Activated CD4-positive, alpha-beta T cell treated with anti-CD3 and anti-CD28 coated beads for 36 hours (primary cell): ENCODE measurements at regions of chr17 and their contacts with region 1.

Region 1: GRCh38 chr17:28357061-28357900 is at the start of gene POLDIP2:
- DNase-seq: peak; percentile 98
- ATAC-seq: peak; percentile 99
- H3K4me3 Mint-ChIP-seq: peak within 1 kb of the TSS; percentile 80
- H3K27ac Mint-ChIP-seq: peak within 1 kb of the TSS; percentile 91
- H3K4me1 Mint-ChIP-seq: peaks cover 28% of the 10 kb centered on the region
- H3K27me3 Mint-ChIP-seq: no peaks in the 10 kb centered on the region
- total RNA-seq, gene POLDIP2: 84.9 to 98.4 TPM

Region 2: DNA sequence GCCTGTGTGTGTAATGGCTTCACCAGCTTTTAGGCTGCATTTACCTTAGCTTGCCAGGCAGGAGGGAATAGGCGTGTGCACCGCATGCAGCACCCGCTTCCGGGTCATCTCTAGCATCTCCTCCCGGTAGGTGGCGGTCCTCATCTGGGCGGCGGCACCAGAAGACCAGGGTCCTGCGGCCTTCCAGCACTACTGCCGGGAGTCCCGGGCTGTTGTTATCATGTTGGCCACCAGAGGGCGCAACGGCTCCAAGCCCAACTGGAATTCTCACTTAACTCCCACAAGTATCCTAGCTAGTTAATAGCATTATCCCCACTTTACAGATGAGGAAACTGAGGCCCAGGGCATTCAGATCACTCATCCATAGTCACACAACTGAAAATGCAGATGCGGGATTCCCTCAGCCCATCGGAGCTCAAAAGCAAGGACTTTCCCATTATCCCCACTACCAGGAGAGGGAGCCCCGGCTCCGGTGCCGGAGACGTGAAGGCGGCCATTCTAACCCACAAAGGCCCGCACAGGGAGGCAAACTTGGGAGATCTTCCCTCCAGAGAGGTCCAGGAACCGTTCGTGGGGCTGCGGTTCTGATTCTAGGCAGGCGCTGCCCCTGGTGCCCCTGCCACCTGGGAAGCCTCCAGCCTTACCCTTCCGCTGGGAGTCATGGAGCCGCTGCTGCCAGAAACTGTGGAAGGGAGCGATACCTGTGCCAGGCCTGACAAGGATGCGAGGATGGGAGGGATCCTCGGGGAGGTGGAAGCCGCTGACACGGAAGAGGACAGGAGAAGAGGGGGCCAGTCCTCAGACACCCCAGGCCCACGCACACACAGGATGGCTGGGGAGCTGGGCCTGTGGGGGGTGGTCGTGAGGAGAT is 702.4 kb before region 1 on chr17:
- CTCF ChIA-PET with region 1: no interaction called
- POLR2A ChIA-PET with region 1: no interaction called
- intact Hi-C with region 1: no loop called
- DNase-seq: peak; percentile 87
- ATAC-seq: peak; percentile 92
- H3K4me3 Mint-ChIP-seq: no peak overlapping the region
- H3K27ac Mint-ChIP-seq: no peak overlapping the region
- H3K4me1 Mint-ChIP-seq: peaks cover 7% of the 10 kb centered on the region
- H3K27me3 Mint-ChIP-seq: no peaks in the 10 kb centered on the region

Region 3: GRCh38 chr17:28041068-28041843 is 316.0 kb before region 1 on chr17:
- CTCF ChIA-PET with region 1: interaction called, 3 read pairs
- POLR2A ChIA-PET with region 1: no interaction called
- intact Hi-C with region 1: loop called in 1 of 2 experiments (anchors 1 kb)
- DNase-seq: peak; percentile 100
- ATAC-seq: peak; percentile 96
- H3K4me3 Mint-ChIP-seq: peak overlapping the region; percentile 79
- H3K27ac Mint-ChIP-seq: peak overlapping the region; percentile 74
- H3K4me1 Mint-ChIP-seq: peaks cover 52% of the 10 kb centered on the region
- H3K27me3 Mint-ChIP-seq: no peaks in the 10 kb centered on the region

Region 4: DNA sequence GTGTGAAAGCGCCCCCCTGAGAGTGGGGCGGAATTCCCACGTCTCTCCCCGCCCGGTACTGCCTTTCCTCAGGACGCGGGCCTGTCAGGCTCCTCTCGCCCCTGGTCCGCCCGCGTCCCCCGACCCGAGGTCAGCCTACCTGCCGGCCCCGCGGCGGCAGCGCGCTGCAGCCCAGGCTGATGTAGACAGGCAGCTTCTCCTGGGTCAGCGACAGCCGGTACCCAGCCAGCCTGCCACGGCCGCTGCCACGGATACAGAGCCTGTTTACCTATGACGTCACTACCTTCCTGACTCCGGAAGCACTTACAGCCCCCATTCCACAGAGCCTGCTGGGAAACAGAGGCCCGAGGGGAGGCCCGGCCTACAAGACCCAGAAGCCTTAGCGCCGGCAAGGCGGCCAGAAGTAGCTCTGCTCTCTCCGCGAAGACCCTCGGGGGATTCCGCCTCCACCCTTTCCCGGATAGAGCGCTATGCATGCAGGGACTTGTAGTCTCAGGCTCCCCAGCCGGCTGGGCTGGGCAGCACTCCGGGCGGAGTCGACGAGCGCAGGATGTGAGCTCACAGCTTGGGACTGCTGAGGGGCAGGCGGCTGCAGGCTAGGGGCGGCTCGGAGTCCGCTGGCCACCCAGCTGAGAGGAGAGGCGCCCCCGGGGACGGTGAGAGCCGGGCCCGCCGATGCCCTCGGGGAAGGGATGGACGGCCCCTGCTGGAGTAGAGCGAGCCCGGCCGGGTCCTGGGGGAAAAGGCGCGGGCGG is 21.9 kb before region 1 on chr17 and contains the starts of genes IFT20 and TNFAIP1:
- CTCF ChIA-PET with region 1: interaction called, 25 read pairs
- POLR2A ChIA-PET with region 1: interaction called, 39 read pairs
- intact Hi-C with region 1: loop called (anchors 1 kb)
- DNase-seq: peak; percentile 99
- ATAC-seq: peak; percentile 97
- H3K4me3 Mint-ChIP-seq: peak within 1 kb of the TSS; percentile 96
- H3K27ac Mint-ChIP-seq: peak within 1 kb of the TSS; percentile 91
- H3K4me1 Mint-ChIP-seq: peaks cover 36% of the 10 kb centered on the region
- H3K27me3 Mint-ChIP-seq: no peaks in the 10 kb centered on the region
- total RNA-seq, gene IFT20: 12.9 to 17.3 TPM
- total RNA-seq, gene TNFAIP1: 25.5 to 26.1 TPM

Region 5: DNA sequence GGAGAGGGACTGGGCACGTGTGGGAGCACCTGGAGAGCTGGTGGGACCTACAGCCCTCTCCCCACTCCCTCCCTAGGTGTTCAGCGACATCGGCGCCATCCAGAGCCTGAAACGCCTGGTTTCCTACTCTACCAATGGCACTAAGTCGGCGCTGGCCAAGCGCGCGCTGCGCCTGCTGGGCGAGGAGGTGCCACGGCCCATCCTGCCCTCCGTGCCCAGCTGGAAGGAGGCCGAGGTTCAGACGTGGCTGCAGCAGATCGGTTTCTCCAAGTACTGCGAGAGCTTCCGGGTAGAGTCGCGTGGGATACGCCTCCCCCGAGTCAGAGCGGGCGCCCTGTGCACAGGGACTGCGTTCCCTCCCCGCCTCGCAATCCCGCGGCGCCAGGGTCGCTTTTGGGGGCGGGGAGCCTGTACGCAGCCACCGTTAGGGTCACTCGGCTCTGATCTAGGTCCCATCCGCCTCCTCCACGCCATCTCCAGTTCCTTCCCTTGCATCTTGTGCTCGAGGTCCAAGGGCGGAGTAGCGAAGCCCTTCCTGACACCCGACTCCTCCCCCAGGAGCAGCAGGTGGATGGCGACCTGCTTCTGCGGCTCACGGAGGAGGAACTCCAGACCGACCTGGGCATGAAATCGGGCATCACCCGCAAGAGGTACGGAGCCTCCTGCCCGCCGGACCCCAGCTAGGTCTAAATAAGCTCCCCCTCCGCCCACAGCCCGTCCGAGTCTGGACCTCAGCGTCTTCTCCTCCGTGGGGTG is 27.2 kb after region 1 on chr17:
- CTCF ChIA-PET with region 1: interaction called, 5 read pairs
- POLR2A ChIA-PET with region 1: no interaction called
- intact Hi-C with region 1: loop called (anchors 1 kb)
- DNase-seq: peak; percentile 85
- ATAC-seq: peak; percentile 93
- H3K4me3 Mint-ChIP-seq: peak overlapping the region; percentile 86
- H3K27ac Mint-ChIP-seq: peak overlapping the region; percentile 73
- H3K4me1 Mint-ChIP-seq: peaks cover 17% of the 10 kb centered on the region
- H3K27me3 Mint-ChIP-seq: peaks cover 11% of the 10 kb centered on the region

Region 6: GRCh38 chr17:28426081-28426519 is 68.8 kb after region 1 on chr17:
- CTCF ChIA-PET with region 1: no interaction called
- POLR2A ChIA-PET with region 1: no interaction called
- intact Hi-C with region 1: no loop called
- DNase-seq: peak; percentile 22
- ATAC-seq: peak; percentile 51
- H3K4me3 Mint-ChIP-seq: no peak overlapping the region
- H3K27ac Mint-ChIP-seq: no peak overlapping the region
- H3K4me1 Mint-ChIP-seq: no peaks in the 10 kb centered on the region
- H3K27me3 Mint-ChIP-seq: no peaks in the 10 kb centered on the region

Region 7: DNA sequence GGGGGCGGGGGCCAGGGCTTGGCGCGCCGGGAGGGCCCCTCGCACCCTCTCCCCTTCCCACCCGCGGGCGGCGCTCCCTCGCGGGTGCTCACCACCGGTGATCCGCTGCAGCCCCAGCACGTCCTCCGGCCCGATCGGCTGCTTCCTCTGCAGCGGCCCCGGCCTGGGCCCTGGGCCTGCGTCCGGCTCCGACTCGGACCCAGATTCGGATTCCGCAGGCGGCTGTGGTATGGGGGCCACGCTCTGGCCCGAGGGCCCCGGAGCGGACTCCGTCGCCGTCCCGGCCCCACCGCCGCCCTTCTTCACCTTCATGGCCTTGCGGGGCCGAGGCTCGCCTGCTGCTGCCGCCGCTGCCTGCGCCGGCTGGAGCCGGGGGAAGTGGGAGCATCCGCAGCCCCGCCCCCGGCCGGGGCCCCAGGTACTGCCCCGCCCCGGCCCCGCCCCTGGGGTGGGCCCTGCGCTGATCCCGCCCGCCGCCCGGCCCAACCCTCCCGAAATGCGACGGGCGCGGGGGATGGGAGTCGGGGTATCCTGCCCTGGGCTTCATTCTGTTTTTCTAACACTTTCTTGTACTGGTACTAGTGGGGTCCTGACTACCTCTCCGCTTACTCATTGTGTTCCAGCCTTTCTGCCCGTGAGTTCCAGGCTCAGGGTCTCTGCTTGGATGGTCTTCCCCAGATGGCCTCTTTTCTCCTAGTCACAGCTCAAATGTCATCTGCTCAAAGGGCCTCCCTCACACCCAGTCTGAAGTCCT is 195.1 kb after region 1 on chr17 and contains the start of gene UNC119:
- CTCF ChIA-PET with region 1: no interaction called
- POLR2A ChIA-PET with region 1: no interaction called
- intact Hi-C with region 1: loop called (anchors 1 to 10 kb)
- DNase-seq: peak; percentile 91
- ATAC-seq: peak; percentile 71
- H3K4me3 Mint-ChIP-seq: peak within 1 kb of the TSS; percentile 87
- H3K27ac Mint-ChIP-seq: peak within 1 kb of the TSS; percentile 70
- H3K4me1 Mint-ChIP-seq: peaks cover 52% of the 10 kb centered on the region
- H3K27me3 Mint-ChIP-seq: no peaks in the 10 kb centered on the region
- total RNA-seq, gene UNC119: 35.9 to 48.7 TPM

Region 8: GRCh38 chr17:28661635-28662537 is 304.6 kb after region 1 on chr17 and contains the starts of genes SDF2 and SUPT6H:
- CTCF ChIA-PET with region 1: no interaction called
- POLR2A ChIA-PET with region 1: no interaction called
- intact Hi-C with region 1: loop called in 1 of 2 experiments (anchors 5 kb)
- DNase-seq: peak; percentile 98
- ATAC-seq: peak; percentile 87
- H3K4me3 Mint-ChIP-seq: peak within 1 kb of the TSS; percentile 94
- H3K27ac Mint-ChIP-seq: peak within 1 kb of the TSS; percentile 99
- H3K4me1 Mint-ChIP-seq: peaks cover 48% of the 10 kb centered on the region
- H3K27me3 Mint-ChIP-seq: no peaks in the 10 kb centered on the region
- total RNA-seq, gene SDF2: 36.6 to 37.2 TPM
- total RNA-seq, gene SUPT6H: 80.6 to 85.8 TPM